Esophagus muscularis mucosa (tissue), 4 donors: ENCODE measurements at regions of chr11 and their contacts with region 1.

Region 1: GRCh38 chr11:10208131-10208575 is 85.9 kb downstream of the SBF2 start:
- DNase-seq: no peak
- H3K4me3 ChIP-seq: no peak overlapping the region
- H3K27ac ChIP-seq: peak overlapping the region; percentile 0 to 16 (median 7)
- H3K4me1 ChIP-seq: peaks cover 0 to 14% (median 11%) of the 10 kb centered on the region in 4 donors
- H3K27me3 ChIP-seq: no peaks in the 10 kb centered on the region
- CTCF ChIP-seq: peak; percentile 73 to 79 (median 76)
- EP300 ChIP-seq: no peak
- POLR2A ChIP-seq: no peak

Region 2: DNA sequence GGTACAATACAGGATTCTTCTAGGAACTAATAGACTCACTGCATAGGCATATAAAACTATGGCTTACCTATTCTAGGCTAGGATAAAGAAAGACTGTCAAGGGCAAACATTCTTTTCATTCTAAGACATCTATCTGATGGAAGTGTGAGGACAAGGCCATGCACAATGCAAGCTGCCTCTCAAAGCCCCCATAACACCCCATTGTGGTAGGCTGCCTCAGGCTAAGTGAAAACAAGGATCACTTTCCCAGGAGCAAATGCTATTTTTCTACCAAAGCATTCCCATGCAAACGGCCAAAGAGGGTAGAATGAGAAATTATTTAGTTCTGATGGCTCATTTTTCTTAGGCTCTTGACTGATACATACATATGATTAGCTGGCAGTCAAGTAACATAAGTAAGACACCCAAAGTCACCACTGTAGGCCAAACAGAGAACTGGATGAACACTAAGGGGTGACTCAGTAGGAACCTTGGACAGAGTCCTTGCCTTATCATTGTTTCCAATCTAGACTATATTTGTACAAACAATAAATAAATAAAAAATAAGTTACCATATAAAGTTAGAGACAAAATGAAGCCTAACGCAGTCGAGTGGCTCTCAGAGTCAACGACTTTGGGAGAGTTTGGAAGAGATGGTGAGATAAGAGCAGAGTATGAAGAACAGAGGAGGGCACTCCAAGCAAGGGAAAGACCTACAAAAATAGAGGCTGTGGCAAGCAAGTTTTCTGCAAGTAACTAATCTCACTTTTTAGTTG is 217.8 kb before region 1 on chr11:
- intact Hi-C with region 1: loop called (anchors 10 kb)
- DNase-seq: no peak
- H3K4me3 ChIP-seq: no peak overlapping the region
- H3K27ac ChIP-seq: no peak overlapping the region
- H3K4me1 ChIP-seq: no peaks in the 10 kb centered on the region
- H3K27me3 ChIP-seq: no peaks in the 10 kb centered on the region
- CTCF ChIP-seq: peak; percentile 27 to 50 (median 39)
- EP300 ChIP-seq: no peak
- POLR2A ChIP-seq: no peak

Region 3: DNA sequence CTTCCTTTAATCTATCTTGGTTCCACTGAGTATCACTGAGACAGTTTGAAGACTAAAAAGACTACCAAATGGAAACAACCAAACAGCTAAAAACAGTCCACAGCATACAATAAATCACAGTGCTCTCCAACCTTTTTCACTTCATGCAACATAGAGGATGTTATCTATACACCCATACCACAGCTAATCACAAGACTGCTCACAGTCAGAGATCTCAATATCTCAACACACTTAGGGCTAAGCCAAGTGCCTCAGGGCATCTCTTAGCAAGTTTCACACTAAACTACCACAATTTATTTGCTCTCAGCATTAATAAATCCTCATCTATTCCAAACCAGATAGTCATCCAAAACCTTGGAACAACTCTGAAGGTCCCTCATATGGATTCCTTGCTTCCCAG is 43.5 kb before region 1 on chr11:
- intact Hi-C with region 1: no loop called
- DNase-seq: no peak
- H3K4me3 ChIP-seq: no peak overlapping the region
- H3K27ac ChIP-seq: no peak overlapping the region
- H3K4me1 ChIP-seq: peaks cover 12 to 48% (median 37%) of the 10 kb centered on the region in 4 donors
- H3K27me3 ChIP-seq: no peaks in the 10 kb centered on the region
- CTCF ChIP-seq: no peak
- EP300 ChIP-seq: no peak
- POLR2A ChIP-seq: no peak

Region 4: DNA sequence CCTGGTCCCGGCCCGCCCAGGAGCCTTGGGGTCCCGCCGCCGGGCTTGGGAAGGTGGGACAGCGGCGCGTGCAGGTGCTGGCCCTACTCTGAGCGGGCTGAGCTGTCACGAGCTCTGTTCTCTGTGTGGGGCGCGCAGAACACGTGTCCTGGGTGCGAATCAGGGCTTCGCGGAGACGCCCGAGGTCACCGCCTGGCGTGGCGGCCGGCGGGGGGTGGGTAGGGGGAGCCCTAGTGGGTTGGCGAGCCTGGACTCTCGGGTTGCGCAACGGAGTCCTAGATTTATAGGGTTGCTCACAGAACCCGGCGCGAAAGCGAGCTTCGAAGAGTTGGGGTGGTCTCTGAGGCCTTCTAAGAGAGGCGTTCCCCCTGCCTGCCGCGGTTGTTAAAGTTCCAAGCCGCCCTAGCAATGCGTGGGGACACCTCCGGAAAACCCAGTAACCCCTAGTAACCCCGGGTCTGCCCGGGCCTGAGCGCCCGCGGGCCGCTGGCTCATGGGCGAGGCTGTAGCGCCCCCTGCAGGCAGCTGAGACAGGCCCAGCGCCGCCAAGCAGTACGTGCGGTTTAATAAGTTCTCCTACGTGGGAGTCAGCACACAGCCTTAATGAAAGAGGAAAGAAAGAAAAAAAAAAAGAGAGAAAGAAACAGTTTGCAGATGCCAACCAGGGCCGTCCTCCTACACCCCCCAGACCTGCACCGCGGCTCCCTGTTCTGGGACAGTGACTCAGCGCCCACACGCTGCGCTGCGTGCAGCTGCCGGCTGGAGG is 99.5 kb after region 1 on chr11:
- intact Hi-C with region 1: loop called (anchors 2 kb)
- DNase-seq: peak; percentile 94
- H3K4me3 ChIP-seq: peak overlapping the region; percentile 64 to 85 (median 81)
- H3K27ac ChIP-seq: peak overlapping the region; percentile 91 to 95 (median 93)
- H3K4me1 ChIP-seq: peaks cover 46 to 77% (median 63%) of the 10 kb centered on the region in 4 donors
- H3K27me3 ChIP-seq: peaks cover 0 to 5% (median 0%) of the 10 kb centered on the region in 4 donors
- CTCF ChIP-seq: peak; percentile 96 to 99 (median 98)
- EP300 ChIP-seq: no peak
- POLR2A ChIP-seq: no peak

Region 5: DNA sequence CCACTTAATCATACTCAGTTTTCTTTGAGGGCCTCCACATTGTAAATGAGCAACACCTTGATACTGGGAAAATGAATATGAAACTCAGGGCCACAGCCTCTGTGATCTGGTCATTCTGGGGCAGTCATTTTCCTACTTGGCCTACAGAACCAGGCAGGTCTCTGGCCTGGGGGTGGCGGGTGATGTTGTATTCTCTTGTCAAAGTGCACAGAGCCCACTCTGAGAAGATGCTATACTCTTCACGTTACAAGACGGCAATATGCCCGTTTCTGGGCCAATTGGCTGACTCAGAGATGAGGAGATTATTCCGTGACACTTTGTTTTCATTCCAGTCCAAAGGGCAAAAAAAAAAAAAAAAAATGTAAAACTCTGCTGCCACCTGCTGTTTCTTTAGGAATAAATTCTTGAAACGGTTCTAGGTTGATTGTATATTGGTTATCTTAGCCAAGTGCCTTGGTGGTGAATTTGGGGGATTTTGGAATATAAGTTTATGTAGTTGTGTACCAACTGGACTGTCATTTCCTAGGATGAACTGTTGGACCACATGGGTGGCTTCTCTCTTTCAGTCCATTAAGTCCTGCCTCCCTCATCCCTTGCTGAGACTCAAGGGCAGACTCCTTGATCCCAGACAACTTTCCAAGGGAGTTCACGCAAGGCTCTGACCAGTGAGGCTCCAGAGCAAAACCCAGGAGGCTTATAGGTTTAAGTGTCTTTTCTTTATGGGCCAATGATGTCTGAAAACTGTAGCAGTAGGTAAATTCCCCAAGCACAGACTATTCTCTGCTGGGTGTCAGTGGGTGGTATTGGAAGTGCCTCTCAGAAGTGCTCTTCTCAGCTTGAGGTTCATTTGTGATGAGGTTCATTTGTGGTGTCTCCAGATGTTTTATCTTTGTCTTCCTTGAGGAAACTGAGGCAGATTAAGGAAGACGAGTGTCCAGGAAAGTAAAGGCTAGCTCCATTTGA is 115.0 kb after region 1 on chr11:
- intact Hi-C with region 1: loop called (anchors 5 kb)
- DNase-seq: peak; percentile 92
- H3K4me3 ChIP-seq: peak overlapping the region in 2 of 4 donors; percentile 13 to 24
- H3K27ac ChIP-seq: peak overlapping the region; percentile 76 to 81 (median 78)
- H3K4me1 ChIP-seq: peaks cover 42 to 99% (median 93%) of the 10 kb centered on the region in 4 donors
- H3K27me3 ChIP-seq: no peaks in the 10 kb centered on the region
- CTCF ChIP-seq: peak; percentile 59 to 73 (median 63)
- EP300 ChIP-seq: no peak
- POLR2A ChIP-seq: no peak